ENCODE measurements at regions of chr19 and their contacts with region 1.

Region 1: DNA sequence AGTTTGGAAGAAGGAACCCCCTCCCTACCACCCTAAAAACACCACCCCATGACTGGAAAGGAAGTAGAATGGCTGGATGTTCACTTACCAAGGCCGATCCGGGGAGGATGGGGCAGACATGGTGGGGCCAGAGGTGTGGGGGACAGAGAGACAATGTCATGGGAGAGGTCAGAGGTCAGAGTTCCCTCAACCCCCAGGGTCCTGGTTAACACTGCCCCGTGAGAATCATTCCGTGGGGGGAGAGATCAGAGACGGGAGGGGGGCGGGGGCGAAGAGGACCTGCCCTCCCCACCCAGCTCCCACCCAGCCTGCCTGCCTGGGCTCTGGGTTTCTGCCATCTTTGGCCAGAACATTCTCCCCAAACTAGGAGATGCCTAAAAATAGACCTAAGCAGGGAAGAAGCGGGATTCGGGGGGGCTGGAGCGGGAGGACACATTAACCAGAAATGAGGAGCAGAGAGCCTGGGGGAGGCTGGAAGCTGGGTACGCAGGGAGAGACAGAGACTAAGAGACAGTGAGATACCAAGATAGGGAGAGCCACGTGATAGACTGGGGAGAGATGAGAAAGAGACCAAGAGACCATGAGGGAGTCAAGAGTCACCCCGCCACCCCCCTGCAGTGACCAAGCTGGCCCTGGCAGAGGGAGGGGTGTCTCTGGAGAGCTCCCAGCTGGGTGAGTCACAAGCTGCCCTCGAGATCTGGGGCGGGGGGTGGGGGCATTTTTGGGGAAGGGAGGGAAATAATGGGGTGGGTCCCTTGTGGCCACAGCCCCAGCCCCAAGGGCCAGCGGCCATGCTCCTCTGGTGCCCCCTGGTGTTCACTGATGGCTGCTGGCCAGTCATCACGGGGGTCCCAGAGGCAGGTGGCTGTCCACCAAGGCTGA is 6.1 kb upstream of the KANK2 start:
- DNase-seq: peak in 13 of 14 experiments; percentile 11 to 64 (median 26)
- ATAC-seq: no peak
- H3K4me3 ChIP-seq: no peak overlapping the region
- H3K4me3 Mint-ChIP-seq: no peak overlapping the region
- H3K27ac ChIP-seq: no peak overlapping the region
- H3K27ac Mint-ChIP-seq: no peak overlapping the region
- H3K4me1 ChIP-seq: no peaks in the 10 kb centered on the region
- H3K4me1 Mint-ChIP-seq: no peaks in the 10 kb centered on the region
- H3K27me3 ChIP-seq: peaks cover 0 to 2% of the 10 kb centered on the region in 2 experiments
- H3K27me3 Mint-ChIP-seq: peaks cover 26% of the 10 kb centered on the region
- CTCF ChIP-seq: peak; percentile 66

Region 2: GRCh38 chr19:10946964-10947657 is 256.3 kb before region 1 on chr19:
- CTCF ChIA-PET with region 1: no interaction called
- POLR2A ChIA-PET with region 1: no interaction called
- intact Hi-C with region 1: loop called in 1 of 2 experiments (anchors 2 kb)
- DNase-seq: no peak
- ATAC-seq: no peak
- H3K4me3 ChIP-seq: no peak overlapping the region
- H3K4me3 Mint-ChIP-seq: no peak overlapping the region
- H3K27ac ChIP-seq: no peak overlapping the region
- H3K27ac Mint-ChIP-seq: no peak overlapping the region
- H3K4me1 ChIP-seq: peaks cover 2% of the 10 kb centered on the region
- H3K4me1 Mint-ChIP-seq: peaks cover 2% of the 10 kb centered on the region
- H3K27me3 ChIP-seq: no peaks in the 10 kb centered on the region
- H3K27me3 Mint-ChIP-seq: no peaks in the 10 kb centered on the region
- CTCF ChIP-seq: no peak

Region 3: DNA sequence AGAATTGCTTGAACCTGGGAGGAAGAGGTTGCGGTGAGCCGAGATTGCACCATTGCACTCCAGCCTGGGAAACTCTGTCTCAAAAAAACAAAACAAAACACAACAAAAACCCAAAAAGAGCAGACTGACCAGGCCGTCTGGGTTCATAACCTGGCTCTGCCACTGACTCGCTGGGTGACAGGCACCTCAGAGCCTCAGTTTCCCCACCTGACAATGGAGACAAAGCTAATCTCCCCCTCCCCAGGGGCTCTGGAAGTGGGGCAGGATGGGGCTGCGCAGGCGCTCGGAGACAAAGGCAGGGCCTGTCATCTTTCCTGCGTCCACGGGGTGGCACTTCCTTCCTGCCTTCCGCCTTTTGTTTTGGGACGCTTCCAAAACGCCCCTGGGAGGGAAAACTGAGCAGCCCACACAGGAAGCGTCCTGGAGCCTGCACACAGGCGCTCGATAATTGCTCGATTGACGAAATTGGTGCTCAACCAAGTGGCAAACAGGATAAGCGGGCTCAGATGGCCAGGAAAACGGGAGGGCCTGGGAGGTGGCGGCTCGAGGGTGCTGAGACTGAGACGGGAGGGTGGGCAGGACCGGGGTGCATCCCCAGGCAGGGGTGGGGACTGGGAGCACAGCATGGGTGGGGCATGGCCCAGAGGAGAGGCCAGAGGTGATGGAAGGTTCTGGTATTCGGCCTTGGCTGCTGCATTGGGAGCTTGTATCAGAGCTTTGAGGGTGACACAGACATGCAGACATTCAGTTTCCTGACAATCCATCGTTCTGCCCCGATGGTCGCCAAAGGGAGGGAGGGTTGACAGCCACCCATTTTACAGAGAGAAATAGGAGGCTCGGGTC is 65.7 kb before region 1 on chr19:
- CTCF ChIA-PET with region 1: no interaction called
- POLR2A ChIA-PET with region 1: no interaction called
- intact Hi-C with region 1: loop called in 1 of 2 experiments (anchors 1 kb)
- DNase-seq: peak; percentile 27 to 80 (median 49)
- ATAC-seq: peak; percentile 92
- H3K4me3 ChIP-seq: peak overlapping the region; percentile 51
- H3K4me3 Mint-ChIP-seq: peak overlapping the region; percentile 83
- H3K27ac ChIP-seq: no peak overlapping the region
- H3K27ac Mint-ChIP-seq: peak overlapping the region; percentile 8
- H3K4me1 ChIP-seq: peaks cover 25% of the 10 kb centered on the region
- H3K4me1 Mint-ChIP-seq: peaks cover 8% of the 10 kb centered on the region
- H3K27me3 ChIP-seq: no peaks in the 10 kb centered on the region
- H3K27me3 Mint-ChIP-seq: no peaks in the 10 kb centered on the region
- CTCF ChIP-seq: peak; percentile 74